ENCODE measurements at regions of chr3 and their contacts with region 1.

Region 1: GRCh38 chr3:62587203-62588117 is 214.1 kb upstream of the FEZF2 start:
- DNase-seq: peak; percentile 84
- H3K4me3 ChIP-seq: no peak overlapping the region
- CTCF ChIP-seq: no peak

Region 2: GRCh38 chr3:62604300-62604699 is 16.8 kb after region 1 on chr3:
- CTCF ChIA-PET with region 1: interaction called, 6 read pairs
- POLR2A ChIA-PET with region 1: interaction called, 23 read pairs
- DNase-seq: no peak
- H3K4me3 ChIP-seq: peak overlapping the region; percentile 37
- CTCF ChIP-seq: no peak